ENCODE measurements at regions of chr15 and their contacts with region 1.

Region 1: DNA sequence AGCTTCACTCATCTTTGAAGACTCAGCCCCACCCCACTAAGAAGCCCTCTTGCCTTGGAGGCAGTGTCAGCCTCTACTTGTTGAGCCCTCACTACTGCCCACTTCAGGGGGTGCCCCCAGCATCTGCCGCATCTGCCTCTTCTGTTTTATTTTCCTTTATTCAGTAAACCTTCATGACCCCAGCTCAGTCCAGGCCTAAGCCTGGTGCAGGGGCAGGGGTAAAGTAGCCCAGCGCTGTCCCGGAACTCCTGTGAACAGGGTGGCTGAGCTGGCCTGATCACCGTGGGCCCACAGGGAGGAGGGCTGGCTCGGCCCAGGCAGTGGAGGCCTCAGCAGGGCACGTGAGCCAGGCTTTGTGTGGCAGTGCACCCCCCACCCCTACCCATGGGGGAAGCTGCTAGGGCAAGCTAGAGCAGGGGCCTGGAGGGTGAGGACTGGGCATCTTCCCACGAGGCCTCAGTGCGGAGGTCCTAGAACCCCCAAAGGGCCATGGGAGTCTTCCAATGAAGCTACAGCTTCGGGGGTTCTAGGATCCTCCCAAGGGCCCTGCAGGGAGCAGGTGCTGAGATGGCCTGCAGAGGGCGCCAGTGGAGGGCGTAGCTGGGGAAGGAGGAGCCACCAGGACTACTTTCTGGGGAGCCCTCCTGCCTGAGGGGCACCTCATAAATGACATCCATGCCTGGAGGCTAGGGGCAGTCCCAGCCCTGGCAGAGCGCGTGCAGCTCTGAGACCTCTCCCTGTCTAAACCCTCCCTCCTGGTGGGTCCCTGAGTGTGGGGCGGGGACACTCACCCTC is 36.0 kb downstream of the TSPAN3 start:
- DNase-seq: peak; percentile 42
- ATAC-seq: peak; percentile 30
- H3K4me3 Mint-ChIP-seq: no peak overlapping the region
- H3K27ac Mint-ChIP-seq: peak overlapping the region; percentile 18
- H3K4me1 Mint-ChIP-seq: peaks cover 17% of the 10 kb centered on the region
- H3K27me3 Mint-ChIP-seq: no peaks in the 10 kb centered on the region
- CTCF ChIP-seq: no peak

Region 2: DNA sequence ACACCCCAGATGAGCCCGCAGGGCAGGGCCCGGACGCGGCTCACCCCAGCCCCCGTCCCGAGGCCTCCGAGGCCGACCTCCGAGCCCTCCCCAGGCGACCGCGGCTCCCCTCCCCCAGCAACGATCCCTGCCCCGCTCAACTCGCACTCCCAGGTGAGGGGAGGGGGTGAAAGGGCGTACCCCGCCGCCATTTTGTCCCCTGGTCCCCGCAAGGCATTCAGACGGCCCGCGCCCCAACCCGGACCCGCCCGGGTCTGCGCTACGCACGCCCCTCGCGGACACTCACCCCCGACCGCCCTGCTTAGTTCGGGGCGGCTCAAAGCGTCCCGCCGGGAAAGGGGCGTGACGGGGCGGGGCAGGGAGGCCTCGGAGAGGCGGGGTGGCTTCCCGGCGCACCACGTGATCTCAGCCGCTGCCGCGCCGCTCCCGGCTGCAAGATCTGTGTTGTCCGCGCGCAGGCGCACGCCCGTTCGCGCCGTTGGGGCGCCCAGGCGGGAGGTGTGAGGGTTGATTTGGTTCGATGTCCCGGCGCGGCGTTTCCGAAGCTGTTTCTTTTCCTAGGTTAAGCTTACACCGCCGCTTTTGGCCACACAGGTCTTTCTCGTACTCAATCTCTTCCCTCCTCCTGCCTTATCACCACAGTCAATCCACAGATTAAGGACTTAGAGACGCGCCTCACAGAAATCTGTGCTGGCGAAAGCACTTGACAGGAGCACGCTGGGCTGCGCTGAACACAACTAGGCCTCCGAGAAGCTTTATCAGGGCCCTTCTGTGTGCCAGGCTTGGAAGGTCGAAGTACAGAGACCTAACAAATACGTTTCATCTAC is 129.7 kb before region 1 on chr15 and contains the start of gene SCAPER:
- CTCF ChIA-PET with region 1: interaction called, 29 read pairs
- POLR2A ChIA-PET with region 1: interaction called, 4 read pairs
- intact Hi-C with region 1: loop called (anchors 1 kb)
- DNase-seq: peak; percentile 92
- ATAC-seq: peak; percentile 86
- H3K4me3 Mint-ChIP-seq: peak within 1 kb of the TSS; percentile 94
- H3K27ac Mint-ChIP-seq: peak within 1 kb of the TSS; percentile 87
- H3K4me1 Mint-ChIP-seq: peaks cover 48% of the 10 kb centered on the region
- H3K27me3 Mint-ChIP-seq: no peaks in the 10 kb centered on the region
- CTCF ChIP-seq: no peak
- total RNA-seq, gene SCAPER: 28.9 and 38.8 TPM in 2 replicates

Region 3: DNA sequence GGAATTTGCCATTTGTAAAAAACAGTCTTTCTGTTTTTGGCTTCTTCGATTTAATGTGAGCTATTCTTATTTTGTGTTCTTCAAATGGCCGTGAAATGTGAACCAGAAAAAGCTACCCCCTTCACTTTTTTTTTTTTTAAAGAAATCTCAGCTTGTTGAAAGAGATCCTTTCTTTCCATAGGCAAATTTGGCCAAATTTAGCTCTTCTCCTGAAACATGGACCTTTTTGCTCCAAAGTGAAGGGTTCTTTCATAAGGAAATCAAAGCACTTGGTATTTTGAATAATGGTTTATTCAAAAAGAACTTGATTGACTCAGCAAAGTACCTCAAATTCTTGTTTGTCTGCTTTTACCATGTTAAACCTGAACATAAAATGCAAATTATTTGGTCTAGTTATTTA is 93.3 kb before region 1 on chr15:
- CTCF ChIA-PET with region 1: interaction called, 13 read pairs
- POLR2A ChIA-PET with region 1: no interaction called
- intact Hi-C with region 1: no loop called
- DNase-seq: no peak
- ATAC-seq: no peak
- H3K4me3 Mint-ChIP-seq: no peak overlapping the region
- H3K27ac Mint-ChIP-seq: no peak overlapping the region
- H3K4me1 Mint-ChIP-seq: peaks cover 20% of the 10 kb centered on the region
- H3K27me3 Mint-ChIP-seq: no peaks in the 10 kb centered on the region
- CTCF ChIP-seq: no peak

Region 4: GRCh38 chr15:76973362-76973743 is 61.5 kb before region 1 on chr15:
- CTCF ChIA-PET with region 1: interaction called, 41 read pairs
- POLR2A ChIA-PET with region 1: interaction called, 3 read pairs
- intact Hi-C with region 1: loop called (anchors 1 kb)
- DNase-seq: no peak
- ATAC-seq: no peak
- H3K4me3 Mint-ChIP-seq: no peak overlapping the region
- H3K27ac Mint-ChIP-seq: no peak overlapping the region
- H3K4me1 Mint-ChIP-seq: peaks cover 6% of the 10 kb centered on the region
- H3K27me3 Mint-ChIP-seq: no peaks in the 10 kb centered on the region
- CTCF ChIP-seq: no peak

Region 5: GRCh38 chr15:76994971-76995945 is 39.6 kb before region 1 on chr15 and contains the start of gene PSTPIP1:
- CTCF ChIA-PET with region 1: no interaction called
- POLR2A ChIA-PET with region 1: interaction called, 10 read pairs
- intact Hi-C with region 1: no loop called
- DNase-seq: peak; percentile 64
- ATAC-seq: peak; percentile 90
- H3K4me3 Mint-ChIP-seq: peak within 1 kb of the TSS; percentile 88
- H3K27ac Mint-ChIP-seq: peak within 1 kb of the TSS; percentile 95
- H3K4me1 Mint-ChIP-seq: peaks cover 60% of the 10 kb centered on the region
- H3K27me3 Mint-ChIP-seq: no peaks in the 10 kb centered on the region
- CTCF ChIP-seq: no peak
- total RNA-seq, gene PSTPIP1: 33.7 and 42.7 TPM in 2 replicates